ENCODE measurements at regions of chr16 and their contacts with region 1.

Region 1: DNA sequence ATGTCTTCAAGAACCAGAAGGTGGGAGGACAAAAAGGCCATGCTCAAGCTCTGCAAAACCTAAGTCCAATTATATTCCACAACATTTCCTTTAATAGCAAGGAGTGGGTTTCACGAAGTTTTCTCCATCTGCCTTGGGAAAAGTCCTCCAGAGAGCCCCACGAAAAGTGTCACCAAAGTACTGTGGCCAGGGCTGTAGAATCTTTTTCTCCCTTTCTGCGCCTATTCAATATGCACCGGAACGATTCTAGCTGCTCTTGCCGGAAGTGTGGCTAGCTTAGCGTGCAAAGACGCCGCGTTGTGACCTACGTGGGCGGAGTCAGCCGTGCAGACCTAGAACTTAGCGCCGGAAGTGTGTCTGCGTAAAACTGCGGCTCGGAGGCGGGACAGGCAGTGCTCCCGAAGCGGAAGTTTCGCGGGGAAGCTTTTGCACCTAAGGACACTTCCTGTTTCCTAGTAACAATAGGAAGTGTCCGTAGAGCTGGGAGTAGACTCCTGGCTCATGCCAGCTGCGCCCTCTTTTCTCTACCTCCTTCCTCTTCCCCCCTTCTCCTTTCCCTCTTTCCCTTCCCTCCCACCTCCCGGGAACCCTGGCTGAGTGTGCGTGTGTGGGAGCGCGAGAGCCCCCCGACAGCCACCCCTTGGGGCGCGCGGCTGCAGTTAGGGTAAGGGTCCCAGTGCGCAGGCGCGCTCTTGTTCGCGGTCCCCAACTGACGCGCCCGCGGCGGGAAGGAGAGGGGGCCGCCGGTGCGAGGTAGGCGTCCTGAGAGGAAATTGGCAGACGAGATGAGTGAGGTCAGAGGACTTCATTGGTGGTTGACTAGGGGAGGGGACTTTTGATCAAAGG is at the starts of genes ZNF646 and ZNF668:
- DNase-seq: peak; percentile 98 to 100 (median 99)
- H3K4me3 ChIP-seq: peak within 1 kb of the TSS; percentile 74 to 99 (median 95)
- H3K27ac ChIP-seq: peak within 1 kb of the TSS; percentile 78 to 98 (median 95)
- H3K27me3 ChIP-seq: no peaks in the 10 kb centered on the region
- CTCF ChIP-seq: peak in 27 of 56 donors; percentile 5 to 44 (median 20)
- total RNA-seq, gene ZNF646: 11.2 to 24.3 (median 16.7) TPM
- total RNA-seq, gene ZNF668: 7.9 to 24.5 (median 12.5) TPM

Region 2: DNA sequence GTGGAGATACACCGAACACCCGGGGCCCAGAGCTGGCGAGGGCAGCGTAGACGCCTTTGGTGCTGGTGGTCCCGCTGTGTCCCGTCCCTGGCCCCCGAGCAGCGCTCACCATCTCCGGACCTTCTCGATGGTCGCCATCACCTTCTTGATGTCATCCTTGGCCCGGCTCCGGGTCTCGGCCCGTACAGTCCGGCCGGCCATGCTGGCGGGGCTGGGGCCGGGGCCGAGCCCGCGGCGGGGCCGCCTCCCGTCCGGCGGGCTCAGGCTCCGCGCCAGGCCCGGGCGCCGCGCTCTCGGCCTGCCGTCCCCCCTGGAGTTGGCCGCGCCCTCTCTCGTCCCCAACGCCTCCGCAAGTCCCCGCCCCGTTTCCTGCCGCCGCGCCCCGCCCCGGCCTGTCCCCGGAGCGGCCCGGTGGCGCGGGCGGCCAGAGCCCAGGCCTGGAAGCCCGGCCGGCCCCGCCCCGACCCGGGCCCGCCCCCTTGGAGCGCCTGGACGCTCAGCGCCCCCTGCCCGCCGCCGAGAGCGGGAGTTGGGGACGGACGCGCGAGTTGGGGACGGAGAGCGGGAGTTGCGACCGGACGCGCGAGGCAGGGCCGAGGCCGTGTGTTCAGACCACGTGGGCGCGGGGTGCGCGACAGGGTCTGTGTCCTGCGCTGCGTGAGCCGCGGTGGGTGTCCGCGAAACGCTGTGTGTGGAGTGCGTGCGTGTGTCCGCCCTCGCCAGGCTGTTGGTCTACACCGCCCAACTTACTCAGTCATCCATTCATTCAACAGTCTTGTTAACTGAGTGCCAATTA is 180.2 kb before region 1 on chr16 and contains the start of gene BCL7C:
- intact Hi-C with region 1: no loop called
- DNase-seq: peak; percentile 60 to 89 (median 77)
- H3K4me3 ChIP-seq: peak within 1 kb of the TSS; percentile 55 to 93 (median 80)
- H3K27ac ChIP-seq: peak within 1 kb of the TSS; percentile 66 to 97 (median 91)
- H3K27me3 ChIP-seq: no peaks in the 10 kb centered on the region
- CTCF ChIP-seq: peak in 51 of 56 donors; percentile 18 to 79 (median 55)
- total RNA-seq, gene BCL7C: 8.8 to 28.1 (median 15.6) TPM

Region 3: DNA sequence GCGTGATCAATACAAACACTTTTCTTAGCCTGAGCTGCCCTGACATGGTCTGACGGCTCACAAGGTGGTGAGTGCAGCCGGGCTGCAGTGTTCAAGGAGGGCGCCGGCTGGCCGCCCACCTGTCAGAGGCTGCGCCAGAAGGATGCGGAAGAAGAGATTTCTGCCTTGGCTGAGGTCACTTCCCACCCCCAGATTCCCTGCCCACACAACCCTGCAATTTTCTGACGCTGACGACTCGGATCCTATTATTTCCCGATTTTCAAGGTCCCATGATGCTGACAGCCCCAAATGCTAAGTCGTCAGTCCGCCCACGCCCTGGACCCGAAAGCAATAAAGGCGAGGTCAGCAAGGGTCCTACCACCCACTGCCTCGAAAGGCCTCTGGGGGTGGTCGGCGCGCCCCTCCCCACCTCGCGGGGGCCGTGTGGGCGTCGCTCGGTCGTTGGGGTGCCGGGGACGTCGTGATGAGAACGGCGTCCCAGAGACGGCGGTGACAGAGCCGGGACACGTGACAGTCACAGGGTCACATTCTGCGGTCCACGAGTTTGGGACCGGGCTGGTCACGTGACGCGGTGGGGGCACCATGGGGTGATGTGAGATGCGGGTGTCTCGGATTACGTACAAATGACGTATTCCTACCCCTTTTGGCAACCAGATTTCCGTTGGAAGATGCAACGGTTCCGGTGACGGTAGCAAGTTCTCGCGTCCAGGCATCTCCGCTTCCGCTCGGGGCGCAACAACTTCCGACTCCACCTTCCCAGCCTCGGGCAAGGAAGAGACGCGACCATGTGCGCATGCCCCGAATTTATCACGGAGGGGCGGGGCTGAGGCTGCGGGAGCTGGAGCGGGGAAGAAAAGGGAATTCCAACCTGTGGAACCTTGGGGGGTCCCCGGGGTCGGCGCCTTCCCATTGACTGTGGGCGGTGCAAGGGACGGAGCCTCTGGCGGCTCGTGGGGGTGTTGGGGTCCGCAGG is 41.2 kb before region 1 on chr16 and contains the start of gene STX4:
- intact Hi-C with region 1: loop called (anchors 1 kb)
- DNase-seq: peak; percentile 96 to 99 (median 98)
- H3K4me3 ChIP-seq: peak within 1 kb of the TSS; percentile 55 to 100 (median 96)
- H3K27ac ChIP-seq: peak within 1 kb of the TSS; percentile 85 to 100 (median 99)
- H3K27me3 ChIP-seq: no peaks in the 10 kb centered on the region
- CTCF ChIP-seq: peak in 20 of 56 donors; percentile 8 to 47 (median 20)
- total RNA-seq, gene STX4: 37.7 to 113 (median 67.3) TPM

Region 4: DNA sequence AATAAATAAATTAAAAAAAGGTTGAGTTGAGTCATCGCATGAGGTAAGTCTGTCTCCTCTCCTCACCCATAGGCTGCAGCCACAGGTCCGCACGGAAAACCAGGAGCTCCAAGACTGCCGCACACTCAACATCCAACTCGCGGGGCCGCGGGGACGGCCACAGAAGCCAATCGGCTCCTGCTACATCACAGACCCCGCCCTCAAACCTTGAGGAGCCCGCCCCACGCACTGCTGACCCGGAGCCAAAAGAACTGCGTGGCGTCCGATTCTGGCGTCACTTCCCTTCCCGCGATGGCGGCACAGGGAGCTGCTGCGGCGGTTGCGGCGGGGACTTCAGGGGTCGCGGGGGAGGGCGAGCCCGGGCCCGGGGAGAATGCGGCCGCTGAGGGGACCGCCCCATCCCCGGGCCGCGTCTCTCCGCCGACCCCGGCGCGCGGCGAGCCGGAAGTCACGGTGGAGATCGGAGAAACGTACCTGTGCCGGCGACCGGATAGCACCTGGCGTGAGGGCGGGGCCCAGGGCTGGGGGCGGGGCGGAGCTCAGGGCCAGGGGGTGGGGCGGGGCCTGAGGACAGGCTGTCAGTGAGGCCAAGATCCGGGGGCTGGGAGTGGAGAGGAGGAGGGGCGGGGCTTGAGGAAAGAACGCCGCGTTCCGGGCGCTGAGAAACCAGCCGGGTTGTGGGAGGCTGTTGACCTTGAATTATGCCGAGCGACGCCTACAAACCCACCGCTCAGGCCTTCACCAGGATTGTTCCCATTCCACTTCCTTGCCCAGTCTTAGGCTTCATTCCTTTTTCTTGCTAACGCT is 43.4 kb after region 1 on chr16 and contains the start of gene KAT8:
- intact Hi-C with region 1: loop called in 1 of 2 experiments (anchors 2 kb)
- DNase-seq: peak; percentile 98 to 99 (median 99)
- H3K4me3 ChIP-seq: peak within 1 kb of the TSS; percentile 31 to 92 (median 78)
- H3K27ac ChIP-seq: peak within 1 kb of the TSS; percentile 59 to 97 (median 92)
- H3K27me3 ChIP-seq: no peaks in the 10 kb centered on the region
- CTCF ChIP-seq: peak in 6 of 56 donors; percentile 5 to 40 (median 16)
- total RNA-seq, gene KAT8: 58.1 to 99.4 (median 78.1) TPM